HEK293 (cell line): ENCODE measurements at regions of chr17 and their contacts with region 1.

Region 1: DNA sequence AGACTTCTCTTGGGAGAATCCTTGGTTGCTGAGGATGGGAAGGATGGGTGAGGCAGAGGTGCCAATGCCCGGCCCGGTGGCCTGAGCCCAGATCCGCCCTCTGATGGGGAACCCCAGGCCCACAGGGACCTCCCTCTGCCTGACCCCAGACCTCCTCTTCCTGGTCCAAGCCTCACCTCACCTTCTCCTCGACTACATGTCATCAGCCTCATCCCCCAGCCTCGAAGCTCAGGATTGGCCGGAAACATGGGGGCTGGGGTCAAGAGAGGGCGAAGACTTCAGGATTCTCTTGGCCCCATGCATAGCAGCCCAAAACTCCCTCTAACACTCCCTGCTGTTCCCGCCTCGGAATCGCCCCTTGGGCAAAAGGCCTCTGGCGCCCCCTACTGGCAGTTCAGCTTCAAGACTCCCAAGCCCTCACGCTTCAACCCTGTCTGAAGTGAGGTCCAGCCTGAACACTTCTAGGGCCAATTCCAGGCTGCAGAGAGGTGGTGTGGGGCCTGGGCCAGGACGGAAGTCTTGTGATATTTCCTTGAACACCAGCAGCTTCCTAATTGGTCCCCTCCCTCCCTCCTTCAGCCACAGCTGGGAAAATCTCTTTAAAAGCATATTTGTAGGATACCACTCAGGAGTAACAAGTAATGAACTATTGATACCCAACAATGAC is 47.2 kb downstream of the ARHGAP27 start:
- H3K4me3 ChIP-seq: no peak overlapping the region
- H3K27ac ChIP-seq: no peak overlapping the region
- H3K4me1 ChIP-seq: no peaks in the 10 kb centered on the region
- CTCF ChIP-seq: peak; percentile 92

Region 2: DNA sequence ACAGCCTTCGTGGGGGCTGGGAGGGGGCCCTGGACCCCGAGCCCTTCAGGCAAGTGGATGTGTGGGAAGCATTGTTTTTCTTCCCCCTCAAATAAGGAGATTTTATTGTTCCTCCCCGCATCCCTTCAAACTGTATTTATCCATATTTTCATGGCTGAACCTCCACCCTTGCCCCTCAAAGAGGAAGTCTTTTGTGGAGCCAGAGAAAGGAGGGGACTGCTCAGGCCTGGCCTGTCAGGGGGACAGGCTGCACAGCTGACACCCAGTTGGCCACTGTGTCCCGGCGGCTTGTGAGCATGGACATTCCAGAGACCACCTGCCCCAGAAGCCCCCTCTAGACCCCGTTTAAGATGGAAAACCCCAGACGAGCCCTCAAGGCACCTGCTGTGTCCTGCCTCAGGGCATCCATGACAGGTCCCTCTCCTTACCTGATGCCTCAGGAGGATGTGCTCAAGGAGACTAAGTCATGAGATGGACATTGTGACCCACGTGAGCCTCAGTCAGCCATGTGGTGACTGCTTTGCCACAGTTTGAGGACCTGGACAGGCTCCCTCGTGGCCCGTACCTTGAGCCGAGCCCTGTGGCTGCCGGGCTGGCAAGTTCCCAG is 207.8 kb before region 1 on chr17:
- CTCF ChIA-PET with region 1: no interaction called
- POLR2A ChIA-PET with region 1: no interaction called
- H3K4me3 ChIP-seq: no peak overlapping the region
- H3K27ac ChIP-seq: no peak overlapping the region
- H3K4me1 ChIP-seq: peaks cover 12% of the 10 kb centered on the region
- CTCF ChIP-seq: no peak

Region 3: GRCh38 chr17:45218895-45219661 is 166.4 kb before region 1 on chr17:
- CTCF ChIA-PET with region 1: interaction called, 31 read pairs
- POLR2A ChIA-PET with region 1: interaction called, 3 read pairs
- H3K4me3 ChIP-seq: no peak overlapping the region
- H3K27ac ChIP-seq: no peak overlapping the region
- H3K4me1 ChIP-seq: no peaks in the 10 kb centered on the region; the same call in 1 of the 2 replicates
- CTCF ChIP-seq: peak; percentile 83

Region 4: GRCh38 chr17:45235416-45236281 is 149.8 kb before region 1 on chr17:
- CTCF ChIA-PET with region 1: interaction called, 27 read pairs
- POLR2A ChIA-PET with region 1: no interaction called
- H3K4me3 ChIP-seq: no peak overlapping the region
- H3K27ac ChIP-seq: no peak overlapping the region
- H3K4me1 ChIP-seq: no peaks in the 10 kb centered on the region
- CTCF ChIP-seq: peak; percentile 66

Region 5: DNA sequence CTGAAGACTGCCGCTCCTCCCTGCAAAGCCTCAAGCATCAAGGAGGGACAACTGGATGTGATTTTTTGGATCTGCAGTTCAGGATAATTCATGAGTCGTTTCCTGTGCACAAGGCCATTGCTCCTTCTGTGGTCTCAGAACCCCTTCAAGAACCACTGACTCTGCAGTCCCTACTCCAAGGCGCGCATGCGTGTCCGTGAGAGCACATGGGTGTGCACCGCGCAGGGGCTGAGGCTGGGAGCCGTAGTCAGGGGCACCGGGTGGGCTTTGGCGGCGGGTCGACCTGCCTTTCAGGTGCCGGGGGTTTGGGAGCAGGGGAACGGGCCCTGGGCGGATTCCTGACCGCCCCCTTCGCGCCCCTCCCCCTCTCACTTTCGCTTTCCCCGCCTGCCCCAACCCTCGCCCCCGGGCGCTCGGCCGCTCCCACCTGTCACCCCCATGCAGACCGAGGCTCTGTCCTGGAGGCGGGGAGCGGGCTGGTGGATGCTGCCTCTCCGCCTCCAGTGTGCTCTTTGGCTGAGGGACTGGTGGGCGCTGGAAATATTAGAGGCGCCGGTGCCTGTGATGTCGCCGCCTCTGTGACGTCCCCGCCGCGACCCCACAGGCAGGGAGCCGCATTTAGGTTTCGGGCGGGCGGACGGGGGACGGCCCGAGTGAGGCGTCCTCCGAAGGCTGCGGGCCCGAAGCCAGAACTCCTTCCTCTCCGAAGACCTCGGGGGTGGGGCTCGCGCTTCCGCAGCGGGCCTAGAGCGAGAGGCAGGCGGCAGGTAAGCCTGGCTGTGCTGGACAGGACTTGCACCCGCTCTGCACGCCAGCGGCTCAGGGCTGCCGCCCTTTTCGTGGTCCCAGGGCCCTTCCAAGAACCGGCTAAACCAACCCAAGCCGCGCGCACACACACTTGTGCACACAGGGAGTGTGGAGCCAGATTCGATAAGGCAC is 123.6 kb before region 1 on chr17 and contains the start of gene SPATA32:
- CTCF ChIA-PET with region 1: interaction called, 12 read pairs
- POLR2A ChIA-PET with region 1: no interaction called
- H3K4me3 ChIP-seq: no peak within 1 kb of the TSS
- H3K27ac ChIP-seq: no peak within 1 kb of the TSS
- H3K4me1 ChIP-seq: no peaks in the 10 kb centered on the region
- CTCF ChIP-seq: no peak

Region 6: DNA sequence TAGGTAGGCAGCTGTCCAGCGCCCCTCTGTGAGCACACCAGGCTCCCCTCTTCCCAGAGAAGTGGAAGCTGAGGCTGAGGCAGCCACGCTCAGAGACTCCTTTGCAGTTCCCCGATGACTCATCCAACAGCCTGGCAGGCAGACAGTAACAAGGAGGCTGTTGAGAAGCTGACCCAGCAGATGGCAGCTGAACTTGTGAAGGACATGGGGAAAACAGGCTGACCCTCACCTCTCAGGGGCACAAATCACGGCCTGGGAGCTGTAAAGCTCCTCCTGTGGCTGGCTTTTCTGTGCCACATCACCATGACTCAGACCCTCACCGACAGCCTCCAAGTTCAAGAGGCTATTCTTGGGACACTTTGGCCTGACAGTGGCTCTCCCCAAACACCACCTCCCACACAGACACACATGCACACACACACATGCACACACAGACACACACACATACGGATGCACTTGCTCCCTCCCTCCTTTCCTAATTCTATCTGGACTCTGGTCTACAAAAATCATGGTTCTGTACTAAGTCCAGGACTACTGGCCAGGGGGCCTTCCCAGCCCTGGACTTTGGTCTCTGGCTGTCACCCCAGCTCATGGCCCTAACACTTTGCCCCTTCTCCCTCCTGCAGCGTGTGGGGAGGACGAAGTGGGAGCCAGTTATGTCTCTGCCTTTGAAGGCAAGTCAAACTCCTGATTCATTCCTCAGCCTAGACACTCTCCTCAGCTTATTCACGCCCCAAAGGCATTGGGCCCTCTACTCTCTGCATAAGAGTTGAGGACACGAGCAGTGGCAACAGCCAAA is 91.9 kb before region 1 on chr17:
- CTCF ChIA-PET with region 1: interaction called, 14 read pairs
- POLR2A ChIA-PET with region 1: no interaction called
- H3K4me3 ChIP-seq: no peak overlapping the region
- H3K27ac ChIP-seq: no peak overlapping the region
- H3K4me1 ChIP-seq: peaks cover 12% of the 10 kb centered on the region
- CTCF ChIP-seq: peak; percentile 27; the same call in 1 of the 2 replicates

Region 7: GRCh38 chr17:45317112-45317928 is 68.1 kb before region 1 on chr17:
- CTCF ChIA-PET with region 1: interaction called, 78 read pairs
- POLR2A ChIA-PET with region 1: interaction called, 9 read pairs
- H3K4me3 ChIP-seq: peak overlapping the region; percentile 23
- H3K27ac ChIP-seq: peak overlapping the region; percentile 75
- H3K4me1 ChIP-seq: peaks cover 52% of the 10 kb centered on the region
- CTCF ChIP-seq: peak; percentile 37; the same call in 1 of the 2 replicates

Region 8: GRCh38 chr17:45357364-45357997 is 28.0 kb before region 1 on chr17:
- CTCF ChIA-PET with region 1: interaction called, 12 read pairs
- POLR2A ChIA-PET with region 1: no interaction called
- H3K4me3 ChIP-seq: no peak overlapping the region
- H3K27ac ChIP-seq: no peak overlapping the region
- H3K4me1 ChIP-seq: no peaks in the 10 kb centered on the region
- CTCF ChIP-seq: no peak

Region 9: DNA sequence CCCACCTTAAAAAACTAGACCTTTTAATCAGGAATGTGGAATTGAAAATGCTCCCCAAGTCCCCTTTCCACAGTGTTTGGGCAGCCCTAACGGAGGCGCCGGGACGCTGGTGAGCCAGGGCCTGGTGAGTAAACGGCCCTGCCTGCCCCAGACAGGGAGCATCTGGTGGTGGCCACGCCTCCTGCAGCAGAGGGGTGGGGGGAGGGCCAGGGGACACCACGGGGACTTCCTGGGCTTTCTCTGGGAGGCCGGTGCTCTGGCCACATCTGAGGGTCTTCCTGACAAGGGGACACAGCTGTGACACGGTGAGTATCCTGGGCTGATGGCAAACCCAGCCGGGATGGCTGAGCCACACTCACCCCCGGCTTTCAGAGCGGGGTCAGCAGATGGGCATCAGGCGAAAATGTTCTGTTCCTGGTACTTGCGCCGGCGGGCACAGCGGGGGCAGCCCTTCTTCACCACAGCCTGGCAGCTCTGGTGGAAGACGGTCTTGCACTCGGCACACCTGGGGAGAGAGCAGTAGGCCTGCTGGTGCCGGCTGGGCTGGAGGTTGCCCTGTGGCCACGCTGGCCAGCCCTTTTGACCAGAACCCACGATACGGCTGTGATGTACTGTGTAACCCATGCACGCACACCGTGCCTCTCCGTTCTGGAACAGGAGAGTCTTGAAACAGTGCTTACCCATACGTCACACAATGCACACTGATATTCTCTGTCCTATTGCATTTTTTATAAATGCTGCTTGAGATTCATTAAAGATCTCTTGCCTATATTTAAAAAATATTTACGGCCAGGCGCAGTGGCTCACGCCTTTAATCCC is 52.2 kb after region 1 on chr17:
- CTCF ChIA-PET with region 1: no interaction called
- POLR2A ChIA-PET with region 1: no interaction called
- H3K4me3 ChIP-seq: no peak overlapping the region
- H3K27ac ChIP-seq: no peak overlapping the region
- H3K4me1 ChIP-seq: no peaks in the 10 kb centered on the region; the same call in 1 of the 2 replicates
- CTCF ChIP-seq: no peak